Breast epithelium (tissue), 4 donors: ENCODE measurements at regions of chr5 and their contacts with region 1.

Region 1: GRCh38 chr5:162174358-162174974 is 106.9 kb downstream of the GABRG2 start:
- DNase-seq: no peak
- H3K4me3 ChIP-seq: no peak overlapping the region
- H3K27ac ChIP-seq: no peak overlapping the region
- H3K4me1 ChIP-seq: no peaks in the 10 kb centered on the region
- H3K27me3 ChIP-seq: no peaks in the 10 kb centered on the region
- CTCF ChIP-seq: no peak
- POLR2A ChIP-seq: no peak

Region 2: DNA sequence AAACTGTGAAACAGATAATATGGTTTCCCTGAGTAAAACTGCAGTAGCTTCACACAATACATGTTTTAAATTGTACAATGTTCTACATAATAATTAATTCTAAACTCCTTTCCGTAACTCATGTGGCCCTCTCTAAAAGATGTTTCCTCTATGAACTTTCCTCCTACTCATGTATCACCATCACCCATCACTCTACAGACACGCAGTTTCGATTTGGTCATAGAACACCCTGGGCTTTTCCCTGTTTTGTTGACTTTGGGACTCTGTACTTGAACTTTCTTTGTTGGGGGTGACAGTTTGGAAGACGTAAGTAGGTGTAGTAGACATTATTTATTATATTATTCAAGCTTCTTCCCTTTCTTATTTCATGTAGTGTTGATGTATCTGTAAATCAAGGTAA is 533.0 kb before region 1 on chr5:
- intact Hi-C with region 1: no loop called
- DNase-seq: no peak
- H3K4me3 ChIP-seq: no peak overlapping the region
- H3K27ac ChIP-seq: no peak overlapping the region
- H3K4me1 ChIP-seq: no peaks in the 10 kb centered on the region
- H3K27me3 ChIP-seq: no peaks in the 10 kb centered on the region
- CTCF ChIP-seq: no peak
- POLR2A ChIP-seq: no peak

Region 3: DNA sequence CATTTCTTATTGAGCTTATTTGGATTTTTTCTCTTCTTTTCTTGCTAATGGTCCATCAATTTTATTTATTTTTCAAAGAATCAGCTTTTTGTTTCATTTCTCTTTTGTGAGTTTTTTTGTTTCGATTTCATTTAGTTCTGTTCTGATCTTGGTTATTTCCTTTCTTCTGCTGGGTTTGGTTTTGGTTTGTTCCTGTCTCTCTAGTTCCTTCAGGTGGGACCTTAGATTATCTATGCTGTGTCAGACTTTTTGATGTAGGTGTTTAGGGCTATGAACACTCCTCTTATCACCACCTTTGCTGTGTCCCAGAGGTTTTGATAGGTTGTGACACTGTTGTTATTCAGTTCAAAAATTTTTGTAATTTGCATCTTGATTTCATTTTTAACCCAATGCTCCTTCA is 12.9 kb after region 1 on chr5:
- intact Hi-C with region 1: no loop called
- DNase-seq: no peak
- H3K4me3 ChIP-seq: no peak overlapping the region
- H3K27ac ChIP-seq: no peak overlapping the region
- H3K4me1 ChIP-seq: no peaks in the 10 kb centered on the region
- H3K27me3 ChIP-seq: no peaks in the 10 kb centered on the region
- CTCF ChIP-seq: no peak
- POLR2A ChIP-seq: no peak

Region 4: DNA sequence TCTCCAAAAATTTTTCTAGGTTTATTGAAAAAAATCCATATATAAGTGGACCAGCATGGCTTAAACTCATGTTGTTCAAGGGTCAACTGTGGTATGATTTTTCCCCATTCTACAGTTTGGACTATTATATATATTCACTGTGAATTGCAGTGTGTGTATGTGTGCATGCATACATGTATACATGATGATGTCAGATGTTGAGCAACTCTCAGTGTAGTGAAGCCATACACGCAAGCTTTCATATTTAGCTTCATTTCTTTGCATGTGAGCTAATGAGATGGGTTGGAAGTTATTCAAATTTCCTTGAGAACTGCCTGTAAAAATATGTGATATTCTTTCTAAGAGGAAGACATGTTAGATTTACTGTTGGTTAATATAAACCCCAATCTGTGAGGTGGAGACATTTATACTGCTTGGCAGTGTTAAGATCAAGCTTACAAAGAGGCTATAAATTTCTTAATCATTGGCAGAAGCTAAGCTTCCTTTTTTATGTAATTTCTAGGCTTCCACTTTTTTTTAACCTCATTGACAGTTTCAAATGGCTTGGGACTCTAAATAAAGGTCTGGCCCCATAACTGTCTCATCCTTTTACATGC is 27.9 kb after region 1 on chr5:
- intact Hi-C with region 1: loop called (anchors 2 kb)
- DNase-seq: no peak
- H3K4me3 ChIP-seq: no peak overlapping the region
- H3K27ac ChIP-seq: no peak overlapping the region
- H3K4me1 ChIP-seq: no peaks in the 10 kb centered on the region
- H3K27me3 ChIP-seq: no peaks in the 10 kb centered on the region
- CTCF ChIP-seq: no peak
- POLR2A ChIP-seq: no peak